Posterior vena cava (tissue), 2 donors: ENCODE measurements at regions of chr18 and their contacts with region 1.

Region 1: DNA sequence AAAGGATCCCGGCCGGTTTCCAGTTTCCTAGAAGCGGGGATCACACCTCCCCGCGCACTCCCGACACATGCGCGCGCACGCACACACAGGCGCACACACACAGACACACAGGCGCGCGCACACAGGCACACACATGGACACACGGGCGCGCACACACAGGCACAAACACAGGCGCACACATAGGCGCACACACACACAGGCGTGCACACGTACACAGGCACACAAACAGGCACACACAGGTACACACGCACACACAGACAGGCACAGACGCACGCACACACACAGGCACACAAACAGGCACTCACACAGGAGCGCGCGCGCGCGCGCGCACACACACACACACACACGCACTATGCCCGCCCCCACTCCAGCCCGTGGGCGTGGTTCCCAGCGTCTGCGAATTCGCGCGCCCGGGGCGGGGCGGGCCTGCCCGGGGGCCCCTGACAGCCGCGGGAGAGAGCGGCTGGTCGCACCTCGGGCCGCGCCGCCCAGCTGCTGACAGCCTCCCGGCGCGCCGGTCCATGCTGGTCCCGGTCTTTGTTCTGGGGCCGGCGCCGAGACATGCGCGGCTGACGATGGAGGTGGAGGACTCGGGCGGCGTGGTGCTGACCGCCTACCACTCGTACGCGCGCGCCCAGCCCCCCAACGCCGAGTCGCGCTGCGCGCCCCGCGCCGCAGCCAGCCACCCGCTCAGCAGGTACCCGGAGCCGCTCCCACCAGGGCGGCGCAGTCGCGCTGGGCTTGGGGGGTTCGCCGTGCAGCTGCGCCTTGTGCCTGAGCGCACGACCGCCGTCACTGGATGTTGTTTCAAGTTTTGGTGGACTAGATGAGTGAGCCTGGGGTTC is at the start of gene ARHGAP28:
- DNase-seq: peak; percentile 89
- total RNA-seq, gene ARHGAP28: 15.6 to 26.2 TPM

Region 2: GRCh38 chr18:6543330-6543908 is 186.1 kb before region 1 on chr18:
- intact Hi-C with region 1: loop called in 1 of 2 experiments (anchors 10 kb)
- DNase-seq: no peak

Region 3: DNA sequence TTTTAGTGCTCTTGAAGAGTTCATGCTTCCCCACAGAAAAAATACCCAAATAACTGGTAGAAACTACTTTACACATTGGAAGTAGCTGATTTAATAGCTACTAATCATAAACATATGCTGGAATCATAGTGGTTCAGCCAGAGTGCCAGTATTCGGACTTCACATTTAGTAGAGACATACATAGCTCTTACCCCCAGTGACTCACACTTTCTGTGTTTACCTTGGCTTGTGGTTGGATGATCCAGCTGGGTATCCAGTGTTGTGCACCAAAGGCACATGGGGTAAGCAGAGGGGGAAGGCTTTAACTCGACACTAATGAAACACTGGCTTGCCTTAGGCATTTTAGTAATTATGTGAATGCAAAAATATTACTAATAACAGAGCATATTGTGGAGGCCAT is 18.2 kb after region 1 on chr18:
- intact Hi-C with region 1: no loop called
- DNase-seq: no peak

Region 4: DNA sequence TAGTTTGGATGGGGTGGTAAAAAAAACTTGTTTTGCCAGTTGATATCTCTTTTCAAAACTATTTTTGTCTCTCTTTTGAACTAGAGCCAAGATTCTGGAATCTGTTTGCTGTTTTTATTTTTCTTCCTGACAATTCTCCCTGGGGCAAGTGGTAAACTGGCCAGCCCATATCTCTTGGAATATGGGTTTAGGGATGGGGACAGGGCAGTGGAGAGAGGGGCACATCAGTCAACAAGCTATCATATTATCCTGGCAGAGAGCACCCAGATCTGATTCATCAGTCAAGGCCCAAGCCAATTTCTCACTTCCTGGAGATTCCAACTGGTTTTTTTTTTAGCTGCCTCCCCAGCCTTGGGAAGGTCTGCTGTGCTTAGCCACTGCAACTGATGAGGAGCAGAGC is 52.3 kb after region 1 on chr18:
- intact Hi-C with region 1: loop called in 1 of 2 experiments (anchors 10 kb)
- DNase-seq: no peak